ENCODE measurements at regions of chr16 and their contacts with region 1.

Region 1: DNA sequence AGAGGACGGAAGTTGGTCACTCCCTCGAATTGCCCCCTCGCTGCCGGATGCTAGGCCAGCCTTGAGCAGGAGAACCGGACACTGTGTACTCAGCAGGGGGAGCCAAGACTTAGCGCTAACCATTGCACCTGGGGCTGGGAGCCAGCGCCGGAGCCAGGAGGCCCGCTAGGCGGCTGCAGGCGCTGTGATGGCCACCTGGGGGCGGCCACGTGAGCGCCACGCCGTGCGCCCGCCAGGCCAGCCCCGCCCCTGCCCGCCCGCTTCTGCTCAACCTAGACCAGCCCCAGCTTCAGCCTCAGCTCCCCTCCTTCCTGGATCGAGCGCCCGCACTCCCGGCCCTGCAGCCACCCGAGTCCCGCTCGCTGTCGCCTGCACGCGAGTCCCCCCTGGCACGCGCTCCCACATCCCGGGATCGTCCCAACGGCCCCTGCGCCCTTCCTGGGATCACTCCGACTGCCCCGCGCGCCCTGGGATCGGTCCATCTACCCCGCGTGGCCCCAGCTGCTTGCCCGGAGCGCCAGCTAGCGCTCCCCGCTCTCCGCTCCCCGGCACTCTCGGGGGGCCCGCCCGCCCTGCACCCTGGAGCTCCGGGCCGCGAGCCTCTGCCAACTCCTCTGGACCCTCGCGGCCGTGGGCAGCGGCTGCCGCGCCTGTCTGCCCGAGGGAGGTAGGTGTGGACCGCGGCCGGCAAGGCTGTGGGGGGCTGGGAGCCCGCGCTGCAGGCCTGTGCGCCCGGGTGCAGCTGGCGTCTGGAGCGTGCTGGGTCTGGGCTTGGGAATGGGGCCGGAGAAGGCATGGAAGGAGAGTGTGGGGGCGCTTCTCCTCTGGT is at the start of gene EEF2K:
- DNase-seq: peak; percentile 95
- ATAC-seq: peak; percentile 88
- H3K4me3 ChIP-seq: peak within 1 kb of the TSS; percentile 92
- H3K27ac ChIP-seq: peak within 1 kb of the TSS; percentile 72
- H3K4me1 ChIP-seq: peaks cover 15% of the 10 kb centered on the region
- H3K27me3 ChIP-seq: no peaks in the 10 kb centered on the region
- CTCF ChIP-seq: peak; percentile 56
- total RNA-seq, gene EEF2K: 9.1 and 15.0 TPM in 2 replicates

Region 2: DNA sequence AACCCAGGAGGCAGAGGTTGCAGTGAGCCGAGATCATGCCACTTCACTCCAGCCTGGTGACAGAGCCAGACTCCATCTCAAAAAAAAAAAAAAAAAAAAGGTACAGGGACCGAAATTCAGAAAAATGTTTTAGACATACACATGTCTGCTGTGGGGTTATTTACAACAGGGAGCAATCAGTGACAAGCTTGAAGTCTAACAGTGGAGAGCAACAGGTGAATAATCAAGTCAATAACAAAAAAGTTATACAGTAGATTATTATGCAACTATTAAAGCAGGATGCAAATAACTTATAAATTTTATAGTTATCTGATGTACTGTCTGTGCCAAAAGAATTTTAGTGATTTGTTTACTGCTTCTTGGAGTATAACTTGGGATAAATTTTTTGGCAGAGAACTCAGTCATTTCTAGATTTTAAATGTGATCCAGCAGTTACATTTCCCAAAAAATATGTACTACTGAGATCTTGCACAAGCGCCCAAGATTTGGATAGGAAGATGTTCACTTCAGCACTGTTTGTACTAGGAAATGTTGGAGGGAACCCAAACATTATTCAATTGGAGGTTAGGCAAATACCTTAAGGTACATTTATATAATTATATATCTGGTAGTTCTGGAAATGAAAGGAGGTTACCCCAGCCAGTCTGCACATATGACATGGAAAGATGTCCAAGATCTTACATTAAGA is 33.9 kb after region 1 on chr16:
- CTCF ChIA-PET with region 1: interaction called, 10 read pairs
- POLR2A ChIA-PET with region 1: no interaction called
- intact Hi-C with region 1: no loop called
- DNase-seq: no peak
- ATAC-seq: no peak; the same call in 1 of the 2 replicates
- H3K4me3 ChIP-seq: no peak overlapping the region
- H3K27ac ChIP-seq: no peak overlapping the region
- H3K4me1 ChIP-seq: no peaks in the 10 kb centered on the region
- H3K27me3 ChIP-seq: no peaks in the 10 kb centered on the region
- CTCF ChIP-seq: no peak

Region 3: DNA sequence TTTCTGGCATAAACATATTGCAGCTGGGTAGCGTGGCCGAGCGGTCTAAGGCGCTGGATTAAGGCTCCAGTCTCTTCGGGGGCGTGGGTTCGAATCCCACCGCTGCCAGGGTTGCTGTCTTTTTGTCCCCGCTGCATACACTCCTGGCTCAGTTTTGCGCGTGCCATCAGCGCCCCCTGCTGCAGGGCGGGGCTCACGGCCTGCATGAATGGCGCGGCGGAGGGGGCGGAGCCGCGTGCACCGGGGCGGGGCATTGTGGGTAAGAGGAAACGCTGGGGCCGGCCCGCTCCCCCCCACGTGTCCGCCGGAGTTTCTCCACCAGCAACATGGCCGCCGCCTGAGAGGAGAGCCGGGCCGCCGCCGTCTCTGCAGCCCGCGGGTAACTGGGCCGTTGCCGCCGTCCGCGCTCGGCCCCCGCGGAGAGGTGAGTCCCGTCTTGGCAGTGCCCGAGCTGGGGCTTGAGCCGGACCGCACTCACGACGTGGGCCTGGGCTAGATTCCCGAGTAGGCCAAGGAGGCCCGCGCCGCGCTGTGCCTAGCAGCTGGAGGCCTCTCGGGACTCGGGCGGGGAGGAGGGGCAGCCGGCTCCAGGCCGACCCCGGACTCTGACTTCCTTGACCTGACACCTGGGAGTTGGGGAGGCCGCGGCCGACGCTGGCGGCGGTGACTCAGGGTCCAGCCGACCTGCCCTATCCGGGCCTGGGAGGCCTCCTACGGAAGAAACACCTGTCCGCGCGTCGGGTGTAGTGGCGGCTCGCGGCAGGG is 91.1 kb after region 1 on chr16 and contains the start of gene POLR3E:
- CTCF ChIA-PET with region 1: interaction called, 3 read pairs
- POLR2A ChIA-PET with region 1: interaction called, 3 read pairs
- intact Hi-C with region 1: loop called (anchors 1 kb)
- DNase-seq: peak; percentile 95
- ATAC-seq: peak; percentile 85
- H3K4me3 ChIP-seq: peak within 1 kb of the TSS; percentile 91
- H3K27ac ChIP-seq: peak within 1 kb of the TSS; percentile 95
- H3K4me1 ChIP-seq: no peaks in the 10 kb centered on the region
- H3K27me3 ChIP-seq: no peaks in the 10 kb centered on the region
- CTCF ChIP-seq: peak; percentile 67
- total RNA-seq, gene POLR3E: 48.8 and 57.1 TPM in 2 replicates